Caco-2 (cell line): ENCODE measurements at regions of chr6 and their contacts with region 1.

Region 1: DNA sequence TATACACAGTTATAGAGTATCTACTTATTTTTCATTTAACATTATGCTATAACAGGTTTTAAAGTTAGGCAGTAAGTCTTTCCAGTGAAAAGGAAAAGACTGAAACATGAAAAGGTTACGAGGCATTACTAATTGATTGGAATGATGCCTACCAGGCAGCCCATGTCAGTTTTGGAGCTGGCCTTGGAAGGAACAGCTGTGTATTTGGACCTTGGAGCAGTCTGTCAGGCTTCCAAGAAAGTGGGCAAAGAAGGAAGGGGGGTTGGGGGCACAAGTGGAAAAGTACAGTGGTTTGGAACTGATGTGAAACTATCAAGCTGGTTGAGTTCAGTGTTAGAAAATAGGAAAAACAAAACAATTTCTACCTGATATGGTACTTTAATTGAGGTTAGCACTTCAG is 41.7 kb downstream of the SLC16A10 start:
- DNase-seq: no peak
- H3K4me3 ChIP-seq: no peak overlapping the region
- H3K4me3 Mint-ChIP-seq: no peak overlapping the region
- H3K27ac Mint-ChIP-seq: no peak overlapping the region
- H3K4me1 ChIP-seq: peaks cover 7% of the 10 kb centered on the region; the same call in 1 of the 2 replicates
- H3K4me1 Mint-ChIP-seq: peaks cover 9% of the 10 kb centered on the region
- H3K27me3 ChIP-seq: no peaks in the 10 kb centered on the region
- H3K27me3 Mint-ChIP-seq: no peaks in the 10 kb centered on the region
- CTCF ChIP-seq: no peak

Region 2: GRCh38 chr6:110981202-110981600 is 147.8 kb before region 1 on chr6:
- CTCF ChIA-PET with region 1: no interaction called
- POLR2A ChIA-PET with region 1: no interaction called
- intact Hi-C with region 1: no loop called
- DNase-seq: no peak
- H3K4me3 ChIP-seq: peak overlapping the region; percentile 86
- H3K4me3 Mint-ChIP-seq: peak overlapping the region; percentile 95
- H3K27ac Mint-ChIP-seq: peak overlapping the region; percentile 98
- H3K4me1 ChIP-seq: no peaks in the 10 kb centered on the region
- H3K4me1 Mint-ChIP-seq: peaks cover 12% of the 10 kb centered on the region
- H3K27me3 ChIP-seq: no peaks in the 10 kb centered on the region
- H3K27me3 Mint-ChIP-seq: no peaks in the 10 kb centered on the region
- CTCF ChIP-seq: no peak

Region 3: GRCh38 chr6:111087106-111087835 is 41.7 kb before region 1 on chr6 and contains the start of gene SLC16A10:
- CTCF ChIA-PET with region 1: no interaction called
- POLR2A ChIA-PET with region 1: no interaction called
- intact Hi-C with region 1: loop called (anchors 5 kb)
- DNase-seq: peak; percentile 83 to 90
- H3K4me3 ChIP-seq: peak within 1 kb of the TSS; percentile 85
- H3K4me3 Mint-ChIP-seq: peak within 1 kb of the TSS; percentile 87
- H3K27ac Mint-ChIP-seq: peak within 1 kb of the TSS; percentile 39
- H3K4me1 ChIP-seq: 0 out of 2 replicates have a peak, but pooled peaks cover 7% of the 10 kb centered on the region
- H3K4me1 Mint-ChIP-seq: peaks cover 14% of the 10 kb centered on the region
- H3K27me3 ChIP-seq: no peaks in the 10 kb centered on the region
- H3K27me3 Mint-ChIP-seq: no peaks in the 10 kb centered on the region
- CTCF ChIP-seq: no peak
- total RNA-seq, gene SLC16A10: 13.6 and 14.2 TPM in 2 replicates

Region 4: GRCh38 chr6:111150577-111150976 is 21.6 kb after region 1 on chr6:
- CTCF ChIA-PET with region 1: no interaction called
- POLR2A ChIA-PET with region 1: no interaction called
- intact Hi-C with region 1: no loop called
- DNase-seq: no peak
- H3K4me3 ChIP-seq: no peak overlapping the region
- H3K4me3 Mint-ChIP-seq: no peak overlapping the region
- H3K27ac Mint-ChIP-seq: no peak overlapping the region
- H3K4me1 ChIP-seq: no peaks in the 10 kb centered on the region
- H3K4me1 Mint-ChIP-seq: peaks cover 7% of the 10 kb centered on the region
- H3K27me3 ChIP-seq: no peaks in the 10 kb centered on the region
- H3K27me3 Mint-ChIP-seq: no peaks in the 10 kb centered on the region
- CTCF ChIP-seq: no peak

Region 5: GRCh38 chr6:111580826-111581505 is 452.0 kb after region 1 on chr6:
- CTCF ChIA-PET with region 1: no interaction called
- POLR2A ChIA-PET with region 1: no interaction called
- intact Hi-C with region 1: no loop called
- DNase-seq: no peak
- H3K4me3 ChIP-seq: no peak overlapping the region
- H3K4me3 Mint-ChIP-seq: no peak overlapping the region
- H3K27ac Mint-ChIP-seq: no peak overlapping the region
- H3K4me1 ChIP-seq: no peaks in the 10 kb centered on the region
- H3K4me1 Mint-ChIP-seq: no peaks in the 10 kb centered on the region
- H3K27me3 ChIP-seq: no peaks in the 10 kb centered on the region
- H3K27me3 Mint-ChIP-seq: no peaks in the 10 kb centered on the region
- CTCF ChIP-seq: no peak